Stomach (tissue), 19 donors: ENCODE measurements at regions of chr2 and their contacts with region 1.

Region 1: GRCh38 chr2:102251042-102251848 is 60.1 kb upstream of the IL1RL1 start:
- DNase-seq: peak; percentile 56 to 78
- H3K4me3 ChIP-seq: peak overlapping the region; percentile 41 to 49 (median 46)
- H3K27ac ChIP-seq: peak overlapping the region in 3 of 5 donors; percentile 38 to 67 (median 47)
- H3K4me1 ChIP-seq: peaks cover 0 to 31% (median 9%) of the 10 kb centered on the region in 4 donors
- H3K27me3 ChIP-seq: peaks cover 0 to 12% (median 5%) of the 10 kb centered on the region in 3 donors
- CTCF ChIP-seq: peak in 3 of 7 experiments; percentile 37 to 54 (median 46)
- EP300 ChIP-seq: no peak
- POLR2A ChIP-seq: no peak

Region 2: GRCh38 chr2:102082571-102083392 is 168.5 kb before region 1 on chr2:
- intact Hi-C with region 1: no loop called
- DNase-seq: peak in 1 of 2 donors; percentile 81
- H3K4me3 ChIP-seq: no peak overlapping the region
- H3K27ac ChIP-seq: peak overlapping the region in 4 of 5 donors; percentile 8 to 81 (median 72)
- H3K4me1 ChIP-seq: peaks cover 12 to 21% (median 15%) of the 10 kb centered on the region in 4 donors
- H3K27me3 ChIP-seq: no peaks in the 10 kb centered on the region
- CTCF ChIP-seq: no peak
- EP300 ChIP-seq: no peak
- POLR2A ChIP-seq: no peak

Region 3: DNA sequence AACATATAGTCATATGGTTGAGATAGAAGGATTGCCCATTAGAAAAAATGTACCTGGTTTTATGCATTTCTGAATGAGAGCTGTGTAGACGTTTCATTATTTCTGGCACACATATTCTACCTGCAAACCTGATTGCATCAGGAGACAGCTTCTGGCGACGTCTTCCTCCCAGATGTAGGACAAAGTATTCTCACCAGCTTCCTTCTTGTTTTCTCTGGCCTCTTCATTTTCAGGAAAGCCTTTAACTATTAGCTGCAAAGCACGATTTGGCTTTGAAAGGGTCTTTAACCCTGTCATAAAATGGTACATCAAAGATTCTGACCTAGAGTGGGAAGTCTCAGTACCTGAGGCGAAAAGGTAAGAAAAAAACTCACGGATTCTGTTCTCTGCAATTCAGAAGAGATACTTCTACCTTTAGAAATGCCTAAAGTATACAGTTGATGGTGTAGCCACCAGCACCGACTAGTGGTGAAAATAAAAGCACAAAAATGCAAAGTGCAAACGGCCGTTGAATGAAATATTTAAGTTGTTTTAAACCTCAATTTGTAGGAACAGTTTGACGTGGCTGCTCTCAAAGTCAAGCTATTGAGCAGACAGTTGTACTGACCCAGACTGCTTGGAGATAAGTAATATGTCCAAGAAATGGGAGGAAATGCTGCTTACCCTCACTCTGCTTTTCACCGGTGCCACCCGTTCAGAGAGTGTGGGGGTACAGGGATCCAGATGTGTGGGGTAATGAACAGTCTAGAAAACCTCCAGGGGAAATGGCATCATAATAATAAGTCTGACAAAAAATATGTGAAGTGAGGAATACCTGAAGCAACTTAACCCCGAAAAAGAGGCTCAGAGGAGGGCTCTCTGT is 192.0 kb after region 1 on chr2:
- intact Hi-C with region 1: loop called (anchors 10 kb)
- DNase-seq: peak in 1 of 2 donors; percentile 66
- H3K4me3 ChIP-seq: no peak overlapping the region
- H3K27ac ChIP-seq: peak overlapping the region in 2 of 5 donors; percentile 5 to 18
- H3K4me1 ChIP-seq: peaks cover 0 to 12% (median 7%) of the 10 kb centered on the region in 4 donors
- H3K27me3 ChIP-seq: no peaks in the 10 kb centered on the region
- CTCF ChIP-seq: peak in 5 of 7 experiments; percentile 39 to 72 (median 63)
- EP300 ChIP-seq: no peak
- POLR2A ChIP-seq: no peak